ENCODE measurements at regions of chr5 and their contacts with region 1.

Region 1: DNA sequence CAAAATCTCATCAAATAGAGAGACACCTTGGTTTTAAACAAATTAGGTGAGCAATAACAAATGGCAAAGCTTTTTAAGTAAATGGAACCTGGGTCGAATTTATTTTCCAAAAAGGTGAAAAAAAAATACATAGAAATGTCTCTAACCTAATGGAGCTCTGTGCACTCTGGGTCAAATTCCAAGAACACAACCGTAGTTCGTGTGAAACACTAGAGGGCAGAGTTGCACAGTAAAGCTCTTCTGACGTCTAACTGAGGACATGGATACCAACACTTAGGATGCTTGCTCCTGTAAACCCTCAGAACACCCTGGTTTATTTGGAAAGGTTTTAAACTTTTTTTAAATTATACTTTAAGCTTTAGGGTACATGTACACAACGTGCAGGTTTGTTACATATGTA is 18.9 kb downstream of the MARCHF11 start:
- DNase-seq: peak; percentile 36
- H3K27ac ChIP-seq: no peak overlapping the region
- CTCF ChIP-seq: peak; percentile 78

Region 2: DNA sequence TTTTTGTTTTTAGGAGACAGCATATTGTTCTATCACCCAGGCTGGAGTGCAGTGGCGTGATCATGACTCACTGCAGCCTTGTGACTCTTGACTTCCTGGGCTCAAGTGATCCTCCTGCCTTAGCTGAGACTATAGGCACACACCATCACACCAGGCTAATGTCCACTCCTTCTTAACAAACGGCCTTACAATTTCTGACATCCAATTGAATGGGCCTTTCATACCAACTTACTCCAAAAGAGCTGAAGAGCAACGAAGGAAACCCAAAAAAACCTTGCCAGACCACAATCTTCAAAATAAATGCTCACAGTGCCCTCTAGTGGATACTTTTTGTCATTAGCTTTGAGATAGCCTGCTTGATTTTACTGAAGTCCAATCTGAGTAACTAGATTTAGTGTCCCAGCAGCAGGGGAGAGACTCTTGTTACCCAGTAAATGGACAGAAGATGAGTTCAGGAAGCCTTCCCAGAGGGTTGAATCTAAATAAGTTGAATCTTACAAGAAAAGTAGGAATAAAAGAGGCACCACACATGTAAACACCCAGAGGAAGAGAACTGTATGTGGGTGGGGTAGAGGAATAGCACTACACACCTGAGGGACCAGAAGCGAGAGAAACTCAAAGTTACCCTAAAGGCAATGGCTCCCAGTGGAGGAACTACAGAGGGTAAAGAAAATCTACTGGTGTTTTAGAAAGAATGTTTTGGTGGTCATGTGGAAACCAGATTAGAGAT is 295.6 kb after region 1 on chr5:
- CTCF ChIA-PET with region 1: interaction called, 10 read pairs
- POLR2A ChIA-PET with region 1: no interaction called
- DNase-seq: peak; percentile 38
- H3K27ac ChIP-seq: no peak overlapping the region
- CTCF ChIP-seq: peak; percentile 86